Left lung (tissue), 14 donors: ENCODE measurements at regions of chr12 and their contacts with region 1.

Region 1: GRCh38 chr12:6323340-6323994 is 13.0 kb downstream of the PLEKHG6 start:
- DNase-seq: peak in 2 of 4 donors; percentile 58 to 68
- ATAC-seq: peak; percentile 64
- H3K4me3 ChIP-seq: no peak overlapping the region
- H3K27ac ChIP-seq: peak overlapping the region; percentile 82 to 85
- H3K4me1 ChIP-seq: peaks cover 19 to 70% of the 10 kb centered on the region in 2 donors
- H3K27me3 ChIP-seq: no peaks in the 10 kb centered on the region
- CTCF ChIP-seq: peak; percentile 21 to 58

Region 2: GRCh38 chr12:5872735-5873134 is 450.7 kb before region 1 on chr12:
- intact Hi-C with region 1: no loop called
- DNase-seq: peak in 1 of 4 donors; percentile 15
- ATAC-seq: no peak
- H3K4me3 ChIP-seq: no peak overlapping the region
- H3K27ac ChIP-seq: no peak overlapping the region
- H3K4me1 ChIP-seq: no peaks in the 10 kb centered on the region
- H3K27me3 ChIP-seq: no peaks in the 10 kb centered on the region
- CTCF ChIP-seq: no peak

Region 3: DNA sequence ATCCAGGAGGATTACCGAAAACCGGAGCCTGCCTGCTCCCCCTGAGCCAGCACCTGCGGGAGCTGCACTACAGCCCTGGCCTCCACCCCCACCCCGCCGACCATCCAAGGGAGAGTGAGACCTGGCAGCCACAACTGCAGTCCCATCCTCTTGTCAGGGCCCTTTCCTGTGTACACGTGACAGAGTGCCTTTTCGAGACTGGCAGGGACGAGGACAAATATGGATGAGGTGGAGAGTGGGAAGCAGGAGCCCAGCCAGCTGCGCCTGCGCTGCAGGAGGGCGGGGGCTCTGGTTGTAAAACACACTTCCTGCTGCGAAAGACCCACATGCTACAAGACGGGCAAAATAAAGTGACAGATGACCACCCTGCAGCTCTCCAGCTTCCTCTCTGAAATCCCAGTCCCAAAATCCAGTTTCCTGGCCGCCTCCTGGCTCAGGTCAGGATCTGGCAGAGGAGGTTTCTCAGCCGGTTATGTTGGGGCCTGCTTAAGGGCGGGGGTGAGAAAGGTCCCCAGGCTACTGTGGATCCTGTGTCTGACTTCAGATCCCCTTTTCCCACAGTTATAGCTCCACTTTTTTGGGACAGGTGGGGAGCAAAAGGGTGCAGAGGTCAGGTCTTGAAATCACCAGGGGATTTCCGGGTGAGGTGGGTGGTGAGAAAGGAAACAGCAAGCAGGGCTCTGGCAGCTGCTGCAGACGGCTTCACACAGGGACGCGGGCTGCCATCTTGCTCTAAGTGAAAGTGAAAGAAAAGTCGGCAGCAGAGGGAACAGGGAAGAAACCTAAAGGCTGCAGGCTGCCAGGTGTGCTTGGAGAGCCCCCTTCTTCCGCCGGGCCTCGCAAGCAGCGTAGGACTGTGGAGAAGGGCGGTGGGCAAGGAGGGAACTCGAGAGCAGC is 128.1 kb after region 1 on chr12 and contains the start of gene TAPBPL:
- intact Hi-C with region 1: loop called in 1 of 2 experiments (anchors 10 kb)
- DNase-seq: peak; percentile 82 to 91 (median 88)
- ATAC-seq: peak; percentile 92
- H3K4me3 ChIP-seq: peak within 1 kb of the TSS; percentile 64 to 75
- H3K27ac ChIP-seq: peak within 1 kb of the TSS; percentile 96 to 98
- H3K4me1 ChIP-seq: peaks cover 7 to 26% of the 10 kb centered on the region in 2 donors
- H3K27me3 ChIP-seq: no peaks in the 10 kb centered on the region
- CTCF ChIP-seq: no peak
- polyA plus RNA-seq, gene TAPBPL: 18.0 to 26.1 (median 19.0) TPM